HEK293 (cell line): ENCODE measurements at regions of chr2 and their contacts with region 1.

Region 1: GRCh38 chr2:228039752-228040534 is 141.5 kb downstream of the SPHKAP start:
- H3K4me3 ChIP-seq: no peak overlapping the region
- H3K27ac ChIP-seq: no peak overlapping the region
- H3K4me1 ChIP-seq: no peaks in the 10 kb centered on the region
- CTCF ChIP-seq: no peak; the same call in 1 of the 2 replicates

Region 2: GRCh38 chr2:227996366-227996765 is 43.6 kb before region 1 on chr2:
- CTCF ChIA-PET with region 1: no interaction called
- POLR2A ChIA-PET with region 1: no interaction called
- H3K4me3 ChIP-seq: no peak overlapping the region
- H3K27ac ChIP-seq: no peak overlapping the region
- H3K4me1 ChIP-seq: no peaks in the 10 kb centered on the region
- CTCF ChIP-seq: no peak

Region 3: DNA sequence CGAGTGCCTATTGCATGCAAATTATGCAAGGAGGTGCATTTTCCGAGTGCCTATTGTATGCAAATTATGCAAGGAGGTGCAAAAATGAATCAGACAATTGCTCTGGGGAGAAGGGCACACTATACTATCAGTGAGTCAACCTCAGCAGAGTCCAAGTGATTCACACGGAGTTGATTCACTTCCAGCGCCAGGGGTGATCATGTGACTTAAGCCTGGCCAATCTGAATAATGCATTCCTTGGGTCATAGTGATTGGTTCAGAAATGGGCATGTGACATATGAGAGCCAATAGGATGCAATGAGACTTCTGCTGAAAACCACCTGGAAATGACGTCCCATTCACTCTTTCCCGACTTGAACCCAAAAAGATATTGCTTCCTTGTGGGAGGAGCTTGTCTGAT is 16.3 kb before region 1 on chr2:
- CTCF ChIA-PET with region 1: interaction called, 13 read pairs
- POLR2A ChIA-PET with region 1: no interaction called
- H3K4me3 ChIP-seq: no peak overlapping the region
- H3K27ac ChIP-seq: no peak overlapping the region
- H3K4me1 ChIP-seq: no peaks in the 10 kb centered on the region
- CTCF ChIP-seq: no peak

Region 4: GRCh38 chr2:228164718-228165117 is 124.8 kb after region 1 on chr2:
- CTCF ChIA-PET with region 1: no interaction called
- POLR2A ChIA-PET with region 1: no interaction called
- H3K4me3 ChIP-seq: no peak overlapping the region
- H3K27ac ChIP-seq: no peak overlapping the region
- H3K4me1 ChIP-seq: no peaks in the 10 kb centered on the region
- CTCF ChIP-seq: no peak